Activated B cell treated with CpG ODN at 0.5 μM for 24 hours (primary cell): ENCODE measurements at regions of chr12 and their contacts with region 1.

Region 1: DNA sequence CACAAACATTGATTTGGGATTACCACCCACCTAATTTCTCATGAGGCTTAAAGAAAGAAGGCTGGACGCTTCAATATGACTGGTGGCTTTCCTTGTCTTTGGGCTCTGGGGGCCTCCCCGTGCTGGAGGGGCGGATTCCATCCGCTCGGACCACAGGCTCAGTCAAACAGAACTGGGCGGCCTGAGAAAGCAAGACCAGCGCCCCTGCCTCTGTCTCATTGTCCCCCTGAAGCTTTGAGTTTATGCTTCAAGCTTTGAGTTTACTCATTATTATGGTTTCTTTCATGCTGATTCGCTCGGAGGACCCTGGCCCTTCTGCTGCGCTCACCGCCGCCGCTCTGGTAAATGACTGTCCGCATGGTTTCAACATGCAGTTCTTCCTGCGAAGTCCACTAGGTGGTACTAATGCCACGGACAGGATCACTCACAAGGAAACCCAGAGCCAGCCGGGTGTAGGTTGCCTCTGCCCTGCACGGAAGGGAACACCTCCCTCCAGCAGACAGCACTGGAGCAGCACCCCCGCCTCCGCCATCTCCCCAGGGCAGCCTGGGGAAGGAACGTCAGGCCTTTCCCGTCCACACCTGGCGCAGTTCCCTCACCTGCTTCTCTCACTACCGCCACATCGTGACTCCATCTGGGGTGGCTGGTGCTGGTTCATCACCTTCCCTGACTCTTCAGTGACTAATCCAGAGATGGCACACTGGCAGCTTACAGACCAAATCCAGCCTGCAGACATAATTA is 13.2 kb upstream of the TIGAR start:
- DNase-seq: no peak
- ATAC-seq: peak; percentile 68
- H3K4me3 Mint-ChIP-seq: no peak overlapping the region
- H3K27ac Mint-ChIP-seq: no peak overlapping the region
- H3K4me1 Mint-ChIP-seq: no peaks in the 10 kb centered on the region
- H3K27me3 Mint-ChIP-seq: no peaks in the 10 kb centered on the region
- CTCF ChIP-seq: no peak

Region 2: GRCh38 chr12:3752741-3753486 is 554.8 kb before region 1 on chr12 and contains the start of gene CRACR2A:
- CTCF ChIA-PET with region 1: no interaction called
- POLR2A ChIA-PET with region 1: no interaction called
- intact Hi-C with region 1: no loop called
- DNase-seq: peak; percentile 85
- ATAC-seq: peak; percentile 87
- H3K4me3 Mint-ChIP-seq: peak within 1 kb of the TSS; percentile 88
- H3K27ac Mint-ChIP-seq: peak within 1 kb of the TSS; percentile 93
- H3K4me1 Mint-ChIP-seq: peaks cover 25% of the 10 kb centered on the region
- H3K27me3 Mint-ChIP-seq: no peaks in the 10 kb centered on the region
- CTCF ChIP-seq: no peak
- total RNA-seq, gene CRACR2A: 22.7 and 25.8 TPM in 2 replicates

Region 3: GRCh38 chr12:4327293-4327692 is 19.5 kb after region 1 on chr12:
- CTCF ChIA-PET with region 1: no interaction called
- POLR2A ChIA-PET with region 1: interaction called, 14 read pairs
- intact Hi-C with region 1: no loop called
- DNase-seq: no peak
- ATAC-seq: no peak
- H3K4me3 Mint-ChIP-seq: no peak overlapping the region
- H3K27ac Mint-ChIP-seq: no peak overlapping the region
- H3K4me1 Mint-ChIP-seq: peaks cover 23% of the 10 kb centered on the region
- H3K27me3 Mint-ChIP-seq: no peaks in the 10 kb centered on the region
- CTCF ChIP-seq: no peak

Region 4: DNA sequence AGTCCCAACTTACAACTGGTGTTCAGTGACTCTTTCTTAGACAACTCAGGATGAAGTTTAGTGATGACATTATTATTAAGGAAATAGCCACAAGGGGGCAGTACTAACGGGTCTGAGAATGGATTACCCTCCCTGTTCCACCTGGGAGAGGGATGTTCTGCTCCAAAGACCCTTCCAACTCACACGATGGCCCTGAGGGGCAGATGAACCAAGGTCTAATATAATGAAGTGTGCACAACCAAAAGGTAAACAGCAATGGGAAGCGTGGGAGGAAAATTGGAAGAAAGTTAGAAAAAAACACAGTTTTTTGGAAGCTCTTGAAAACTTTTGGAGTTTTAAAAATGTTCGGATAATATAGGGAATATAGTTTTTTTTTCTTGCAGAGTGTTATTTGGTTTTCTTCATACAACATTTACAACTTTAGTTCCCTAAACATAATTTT is 113.8 kb after region 1 on chr12:
- CTCF ChIA-PET with region 1: no interaction called
- POLR2A ChIA-PET with region 1: no interaction called
- intact Hi-C with region 1: loop called (anchors 5 kb)
- DNase-seq: no peak
- ATAC-seq: peak; percentile 31
- H3K4me3 Mint-ChIP-seq: no peak overlapping the region
- H3K27ac Mint-ChIP-seq: no peak overlapping the region
- H3K4me1 Mint-ChIP-seq: no peaks in the 10 kb centered on the region
- H3K27me3 Mint-ChIP-seq: peaks cover 5% of the 10 kb centered on the region
- CTCF ChIP-seq: no peak